ENCODE measurements at regions of chr3 and their contacts with region 1.

Region 1: GRCh38 chr3:112642912-112643506 is 2.1 kb upstream of the CCDC80 start:
- DNase-seq: peak; percentile 92
- ATAC-seq: peak; percentile 96
- H3K4me3 Mint-ChIP-seq: peak overlapping the region; percentile 38
- H3K27ac Mint-ChIP-seq: no peak overlapping the region
- H3K4me1 Mint-ChIP-seq: peaks cover 15% of the 10 kb centered on the region
- H3K27me3 Mint-ChIP-seq: peaks cover 17% of the 10 kb centered on the region
- CTCF ChIP-seq: peak; percentile 71

Region 2: DNA sequence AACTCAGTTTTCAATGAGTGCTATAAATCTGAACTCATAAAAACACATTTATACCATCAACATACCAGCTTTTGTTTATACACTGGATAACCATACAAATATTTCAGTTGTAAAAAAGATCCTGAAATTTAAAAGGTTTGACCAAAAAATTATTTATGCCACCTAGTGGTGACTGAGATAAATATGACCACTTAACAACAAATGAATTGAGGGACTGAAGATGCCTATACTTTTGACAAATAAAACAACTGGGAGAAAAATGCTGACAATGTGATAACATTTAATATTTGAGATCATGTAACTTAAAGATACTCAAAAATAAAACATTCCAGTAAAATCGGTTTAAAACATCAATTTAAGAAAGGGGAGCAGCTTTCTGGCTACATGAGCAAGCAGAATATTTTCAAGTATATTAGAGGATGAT is 111.6 kb before region 1 on chr3:
- CTCF ChIA-PET with region 1: no interaction called
- POLR2A ChIA-PET with region 1: no interaction called
- intact Hi-C with region 1: no loop called
- DNase-seq: no peak
- ATAC-seq: peak; percentile 45
- H3K4me3 Mint-ChIP-seq: no peak overlapping the region
- H3K27ac Mint-ChIP-seq: no peak overlapping the region
- H3K4me1 Mint-ChIP-seq: peaks cover 5% of the 10 kb centered on the region
- H3K27me3 Mint-ChIP-seq: no peaks in the 10 kb centered on the region
- CTCF ChIP-seq: peak; percentile 57

Region 3: DNA sequence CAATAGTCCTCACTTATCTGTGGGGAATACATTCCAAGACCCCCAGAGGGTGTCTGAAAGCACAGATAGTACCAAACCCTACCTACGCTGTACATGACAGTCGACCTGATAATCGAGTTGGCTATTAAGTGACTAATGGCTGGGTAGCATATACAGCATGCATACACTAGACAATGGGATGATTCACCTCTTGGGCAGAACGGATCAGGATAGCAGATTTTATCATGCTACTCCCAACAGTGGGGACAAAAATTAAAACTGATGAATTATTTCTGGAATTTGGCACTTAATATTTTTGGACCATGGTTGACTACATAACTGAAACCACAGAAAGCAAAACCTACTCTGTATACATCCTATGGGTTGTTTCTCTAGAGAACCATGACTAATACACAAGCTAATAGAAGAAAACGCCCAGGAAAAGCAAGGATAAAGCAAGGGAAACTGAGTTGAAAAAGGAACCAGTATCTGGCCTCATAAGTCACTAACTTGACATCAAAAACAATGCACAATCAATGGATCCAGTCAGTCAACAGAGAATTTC is 96.7 kb before region 1 on chr3:
- CTCF ChIA-PET with region 1: no interaction called
- POLR2A ChIA-PET with region 1: no interaction called
- intact Hi-C with region 1: no loop called
- DNase-seq: no peak
- ATAC-seq: no peak
- H3K4me3 Mint-ChIP-seq: no peak overlapping the region
- H3K27ac Mint-ChIP-seq: no peak overlapping the region
- H3K4me1 Mint-ChIP-seq: peaks cover 8% of the 10 kb centered on the region
- H3K27me3 Mint-ChIP-seq: no peaks in the 10 kb centered on the region
- CTCF ChIP-seq: no peak

Region 4: GRCh38 chr3:112629425-112629824 is 13.6 kb before region 1 on chr3:
- CTCF ChIA-PET with region 1: interaction called, 23 read pairs
- POLR2A ChIA-PET with region 1: no interaction called
- intact Hi-C with region 1: no loop called
- DNase-seq: peak; percentile 15
- ATAC-seq: peak; percentile 27
- H3K4me3 Mint-ChIP-seq: no peak overlapping the region
- H3K27ac Mint-ChIP-seq: no peak overlapping the region
- H3K4me1 Mint-ChIP-seq: no peaks in the 10 kb centered on the region
- H3K27me3 Mint-ChIP-seq: peaks cover 2% of the 10 kb centered on the region
- CTCF ChIP-seq: no peak

Region 5: DNA sequence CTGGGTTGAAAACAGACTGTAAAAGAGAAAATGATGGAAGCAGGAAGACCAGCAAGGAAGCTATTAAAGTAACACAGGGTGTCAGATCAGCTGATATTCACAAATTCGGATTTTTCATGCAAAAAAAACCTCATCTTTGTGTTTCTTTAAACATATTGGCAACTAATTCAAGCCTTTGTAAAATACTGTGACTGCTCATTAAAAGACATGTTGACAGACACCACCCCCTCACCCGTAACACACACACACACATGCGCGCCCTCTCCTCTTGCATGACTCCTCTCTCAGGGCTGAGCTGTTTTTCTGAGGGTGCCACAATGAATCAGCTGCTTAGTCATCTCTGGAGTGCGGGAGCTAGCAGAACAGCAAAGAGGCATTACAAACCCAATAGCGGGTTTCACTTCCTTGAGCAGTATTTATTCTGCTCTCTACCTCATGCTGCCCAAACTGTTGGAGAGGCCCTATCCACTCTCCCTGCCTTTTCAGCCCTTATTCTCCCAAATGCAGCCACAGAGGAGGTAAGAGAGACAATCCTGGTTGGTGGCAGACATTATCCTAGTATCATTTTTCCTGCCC is 33.7 kb after region 1 on chr3:
- CTCF ChIA-PET with region 1: interaction called, 20 read pairs
- POLR2A ChIA-PET with region 1: no interaction called
- intact Hi-C with region 1: no loop called
- DNase-seq: peak; percentile 97
- ATAC-seq: peak; percentile 94
- H3K4me3 Mint-ChIP-seq: peak overlapping the region; percentile 34
- H3K27ac Mint-ChIP-seq: peak overlapping the region; percentile 65
- H3K4me1 Mint-ChIP-seq: peaks cover 58% of the 10 kb centered on the region
- H3K27me3 Mint-ChIP-seq: peaks cover 10% of the 10 kb centered on the region
- CTCF ChIP-seq: no peak

Region 6: GRCh38 chr3:112814266-112814665 is 171.3 kb after region 1 on chr3:
- CTCF ChIA-PET with region 1: interaction called, 13 read pairs
- POLR2A ChIA-PET with region 1: no interaction called
- intact Hi-C with region 1: loop called (anchors 10 kb)
- DNase-seq: no peak
- ATAC-seq: no peak
- H3K4me3 Mint-ChIP-seq: no peak overlapping the region
- H3K27ac Mint-ChIP-seq: no peak overlapping the region
- H3K4me1 Mint-ChIP-seq: peaks cover 3% of the 10 kb centered on the region
- H3K27me3 Mint-ChIP-seq: no peaks in the 10 kb centered on the region
- CTCF ChIP-seq: no peak

Region 7: DNA sequence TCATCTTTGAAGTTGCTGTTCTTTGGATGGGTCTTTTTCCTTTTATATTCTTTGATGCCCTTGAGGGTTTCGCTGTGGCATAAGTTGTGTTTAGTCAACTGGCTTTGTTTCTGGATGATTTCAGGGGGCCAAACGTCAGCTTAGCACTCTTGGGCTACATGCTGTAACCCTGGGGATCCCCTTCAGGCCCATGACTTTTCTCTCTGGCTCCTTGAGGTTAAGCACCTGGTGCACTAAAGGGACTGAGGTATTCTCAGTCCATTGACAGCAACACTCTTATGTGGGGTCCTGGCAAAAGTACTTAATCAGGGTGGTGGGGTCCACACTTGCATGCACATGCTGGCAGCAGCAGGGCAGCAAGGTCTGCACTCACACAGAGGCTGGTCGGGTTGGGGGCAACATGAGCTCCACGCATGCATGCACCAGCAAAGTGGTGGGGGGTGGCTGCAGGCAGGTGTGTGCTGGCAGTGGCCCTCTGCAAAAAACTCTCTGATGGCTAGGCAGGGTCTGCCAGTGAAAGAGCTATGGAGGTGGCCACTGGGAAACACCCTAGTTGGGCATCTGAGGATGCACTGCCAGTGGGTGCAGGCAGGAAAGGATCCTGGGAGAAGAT is 241.8 kb after region 1 on chr3:
- CTCF ChIA-PET with region 1: no interaction called
- POLR2A ChIA-PET with region 1: no interaction called
- intact Hi-C with region 1: no loop called
- DNase-seq: no peak
- ATAC-seq: no peak
- H3K4me3 Mint-ChIP-seq: no peak overlapping the region
- H3K27ac Mint-ChIP-seq: no peak overlapping the region
- H3K4me1 Mint-ChIP-seq: no peaks in the 10 kb centered on the region
- H3K27me3 Mint-ChIP-seq: no peaks in the 10 kb centered on the region
- CTCF ChIP-seq: no peak

Region 8: GRCh38 chr3:112979240-112979832 is 336.3 kb after region 1 on chr3:
- CTCF ChIA-PET with region 1: interaction called, 63 read pairs
- POLR2A ChIA-PET with region 1: no interaction called
- intact Hi-C with region 1: loop called (anchors 1 kb)
- DNase-seq: no peak
- ATAC-seq: peak; percentile 38
- H3K4me3 Mint-ChIP-seq: no peak overlapping the region
- H3K27ac Mint-ChIP-seq: no peak overlapping the region
- H3K4me1 Mint-ChIP-seq: peaks cover 60% of the 10 kb centered on the region
- H3K27me3 Mint-ChIP-seq: no peaks in the 10 kb centered on the region
- CTCF ChIP-seq: peak; percentile 88

Region 9: DNA sequence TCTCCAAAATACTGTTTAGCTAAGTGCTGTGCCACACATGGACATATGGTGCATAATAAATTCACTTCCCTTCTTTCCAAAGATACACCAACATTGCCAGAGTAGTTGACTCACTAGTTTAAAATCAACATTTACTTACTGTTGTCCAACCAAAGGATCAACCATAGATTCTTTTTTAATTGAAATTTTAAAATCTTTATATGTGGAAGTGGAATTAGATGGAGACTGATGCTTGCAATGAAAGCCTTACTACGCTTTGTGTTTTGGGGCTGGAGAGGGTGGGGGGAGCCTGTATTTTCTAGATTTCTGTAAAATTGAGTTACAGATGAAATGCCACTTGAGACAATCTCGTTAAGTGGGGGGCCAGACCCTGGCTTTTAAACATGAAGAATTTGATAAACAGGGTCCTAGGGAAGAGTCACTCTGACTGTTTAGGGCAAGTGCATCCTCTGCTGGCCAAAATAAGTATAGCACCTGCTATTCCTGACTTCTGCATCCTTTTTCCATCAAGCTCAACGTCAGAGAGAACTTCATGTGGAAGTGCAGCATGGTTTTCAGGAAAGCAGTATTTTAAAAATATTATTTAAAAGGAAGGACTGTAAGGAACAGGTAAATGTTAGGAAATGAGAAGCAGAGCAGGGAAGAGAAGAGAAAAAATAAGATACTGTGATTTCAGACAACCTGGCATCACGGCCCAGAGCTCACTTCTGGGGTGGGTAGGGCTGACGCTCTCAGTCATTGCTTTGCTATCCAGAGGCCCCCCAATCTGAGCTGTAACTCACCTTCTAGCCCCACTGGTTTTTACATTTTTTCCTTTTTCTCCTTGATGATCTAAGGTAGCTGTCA is 645.0 kb after region 1 on chr3:
- CTCF ChIA-PET with region 1: interaction called, 11 read pairs
- POLR2A ChIA-PET with region 1: no interaction called
- intact Hi-C with region 1: no loop called
- DNase-seq: peak; percentile 69
- ATAC-seq: peak; percentile 66
- H3K4me3 Mint-ChIP-seq: no peak overlapping the region
- H3K27ac Mint-ChIP-seq: no peak overlapping the region
- H3K4me1 Mint-ChIP-seq: no peaks in the 10 kb centered on the region
- H3K27me3 Mint-ChIP-seq: no peaks in the 10 kb centered on the region
- CTCF ChIP-seq: peak; percentile 97

Measured in activated CD8-positive, alpha-beta T cell treated with anti-CD3 and anti-CD28 coated beads for 36 hours (primary cell).